ENCODE measurements at regions of chr1 and their contacts with region 1.

Region 1: DNA sequence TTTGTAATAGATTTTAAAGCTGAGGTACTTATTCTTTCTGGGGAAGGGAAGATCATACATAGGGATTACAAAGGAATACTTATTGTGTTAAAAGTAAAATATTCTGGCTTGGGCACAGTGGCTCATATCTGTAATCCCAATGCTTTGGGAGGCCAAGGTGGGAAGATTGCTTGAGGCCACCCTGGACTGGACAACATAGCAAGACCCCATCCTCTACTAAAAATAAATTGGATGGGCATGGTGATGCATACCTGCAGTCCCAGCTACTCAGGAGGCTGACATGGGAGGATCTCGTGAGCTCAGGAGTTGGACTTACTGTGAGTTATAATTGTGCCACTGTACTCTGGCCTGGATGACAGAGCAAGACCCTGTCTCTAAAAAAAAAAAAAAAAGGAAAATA is 27.6 kb downstream of the GABPB2 start:
- DNase-seq: no peak
- ATAC-seq: no peak
- H3K4me3 ChIP-seq: no peak overlapping the region
- H3K27ac ChIP-seq: no peak overlapping the region
- H3K4me1 ChIP-seq: no peaks in the 10 kb centered on the region
- H3K27me3 ChIP-seq: no peaks in the 10 kb centered on the region
- CTCF ChIP-seq: no peak
- EP300 ChIP-seq: no peak
- POLR2A ChIP-seq: no peak
- RAD21 ChIP-seq: no peak

Region 2: DNA sequence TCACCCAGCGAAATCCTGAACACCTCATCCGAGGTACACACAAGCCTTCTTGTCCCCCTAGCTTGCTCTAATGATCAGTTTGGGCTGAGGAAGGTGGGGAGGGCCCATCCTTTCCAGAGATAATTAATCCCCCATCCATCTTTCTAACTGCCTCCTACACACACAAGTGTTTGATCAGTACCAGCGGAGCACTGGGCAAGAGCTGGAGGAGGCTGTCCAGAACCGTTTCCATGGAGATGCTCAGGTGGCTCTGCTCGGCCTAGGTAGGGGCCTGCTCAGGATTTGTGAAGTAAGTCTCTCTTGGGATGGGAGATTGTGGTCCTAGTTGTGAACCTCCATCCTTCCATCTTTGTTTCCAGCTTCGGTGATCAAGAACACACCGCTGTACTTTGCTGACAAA is 110.2 kb before region 1 on chr1:
- CTCF ChIA-PET with region 1: no interaction called
- POLR2A ChIA-PET with region 1: no interaction called
- RAD21 ChIA-PET with region 1: no interaction called
- SMC1A ChIA-PET with region 1: no interaction called
- in situ Hi-C with region 1: no loop called
- intact Hi-C with region 1: no loop called
- DNase-seq: no peak
- ATAC-seq: no peak
- H3K4me3 ChIP-seq: no peak overlapping the region
- H3K27ac ChIP-seq: no peak overlapping the region
- H3K4me1 ChIP-seq: no peaks in the 10 kb centered on the region
- H3K27me3 ChIP-seq: no peaks in the 10 kb centered on the region
- CTCF ChIP-seq: no peak
- EP300 ChIP-seq: no peak
- POLR2A ChIP-seq: no peak
- RAD21 ChIP-seq: no peak

Region 3: DNA sequence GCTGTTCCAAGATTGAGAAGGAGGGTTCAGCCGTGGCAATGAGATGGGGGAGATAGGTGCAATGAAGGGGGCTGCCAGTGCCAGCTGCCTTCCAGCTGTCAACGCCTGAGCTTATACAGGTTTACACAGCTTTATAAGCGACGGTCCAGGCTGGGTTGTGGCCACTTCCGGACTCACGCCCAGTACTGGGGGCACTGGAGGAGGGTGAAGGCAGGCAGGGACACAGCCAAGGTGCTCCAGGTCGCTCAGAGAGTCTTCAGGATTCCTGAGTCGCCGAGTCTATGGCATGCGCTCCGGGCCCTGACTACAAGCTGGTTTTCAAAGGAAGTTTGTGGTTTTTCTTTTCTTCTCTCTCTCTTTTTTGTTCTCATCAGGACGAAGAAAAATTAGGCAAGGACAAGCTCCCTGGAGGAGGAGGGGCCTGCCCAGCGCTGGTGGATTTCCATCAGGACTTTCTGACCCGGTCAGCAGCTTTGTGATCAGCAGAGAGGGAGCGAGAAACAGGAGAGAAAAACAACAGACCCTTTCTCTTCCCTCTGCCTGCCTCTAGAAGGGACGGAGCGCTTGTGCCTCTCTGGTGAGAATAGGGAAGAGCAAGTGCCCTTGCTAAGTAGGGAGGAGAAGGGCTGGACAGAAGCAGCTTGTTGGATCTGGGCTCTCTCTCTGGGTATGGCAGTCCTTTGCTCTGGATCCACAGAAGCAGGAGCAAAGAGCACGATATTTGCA is 91.6 kb before region 1 on chr1 and contains the start of gene MINDY1:
- CTCF ChIA-PET with region 1: interaction called, 11 read pairs
- POLR2A ChIA-PET with region 1: interaction called, 5 read pairs
- RAD21 ChIA-PET with region 1: interaction called, 3 read pairs
- SMC1A ChIA-PET with region 1: interaction called, 4 read pairs
- in situ Hi-C with region 1: no loop called
- intact Hi-C with region 1: no loop called
- DNase-seq: peak; percentile 32
- ATAC-seq: peak; percentile 71
- H3K4me3 ChIP-seq: peak within 1 kb of the TSS; percentile 73
- H3K27ac ChIP-seq: peak within 1 kb of the TSS; percentile 73
- H3K4me1 ChIP-seq: peaks cover 12% of the 10 kb centered on the region
- H3K27me3 ChIP-seq: no peaks in the 10 kb centered on the region
- CTCF ChIP-seq: peak; percentile 38 to 57 (median 43); a peak in 4 of 6 replicates
- EP300 ChIP-seq: no peak
- POLR2A ChIP-seq: peak; percentile 60
- RAD21 ChIP-seq: peak; percentile 39; the same call in 1 of the 2 replicates
- polyA plus RNA-seq, gene MINDY1: 0.48 to 0.49 TPM

Region 4: DNA sequence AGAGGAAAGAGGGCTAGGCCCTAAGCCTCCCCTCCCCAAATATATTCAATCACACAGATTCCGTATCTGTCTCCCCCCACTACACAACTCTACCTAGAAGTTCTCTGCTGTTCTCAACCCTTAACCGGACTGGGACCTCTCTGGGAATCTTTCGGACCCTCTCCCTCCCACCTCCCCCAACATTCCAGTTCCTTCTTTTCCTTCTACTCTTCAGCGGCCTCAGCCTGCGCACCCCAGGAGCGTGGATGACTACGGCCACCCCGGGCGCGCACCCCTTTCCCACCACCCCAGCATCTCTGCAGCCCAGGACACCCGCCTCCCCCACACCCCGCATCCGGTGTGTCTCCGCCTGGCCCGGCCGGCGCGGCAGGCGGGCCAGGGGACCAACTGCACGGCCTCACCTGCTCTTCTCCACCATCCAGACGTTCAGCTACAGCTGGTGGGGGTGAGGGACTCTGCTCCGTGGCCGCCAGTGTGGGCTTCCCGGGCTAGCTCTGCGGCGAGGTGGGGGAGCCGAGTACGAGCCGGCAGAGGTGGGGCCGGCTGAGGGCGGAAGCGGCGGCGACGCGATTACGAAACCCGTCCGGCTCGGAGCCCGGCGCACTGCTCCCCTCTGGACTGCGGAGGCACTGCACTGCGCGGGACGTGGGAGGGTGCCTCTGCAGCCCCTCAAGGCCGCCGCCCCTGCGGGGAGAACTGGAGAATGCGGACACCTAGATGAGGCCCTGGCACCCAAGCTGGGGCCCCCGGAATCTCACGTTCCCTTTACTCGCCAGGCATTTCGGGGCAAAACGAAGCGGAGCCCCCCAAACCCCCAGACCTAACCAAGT is 38.8 kb before region 1 on chr1 and contains the start of gene CDC42SE1:
- CTCF ChIA-PET with region 1: interaction called, 12 read pairs
- POLR2A ChIA-PET with region 1: no interaction called
- RAD21 ChIA-PET with region 1: interaction called, 4 read pairs
- SMC1A ChIA-PET with region 1: interaction called, 9 read pairs
- in situ Hi-C with region 1: no loop called
- intact Hi-C with region 1: no loop called
- DNase-seq: peak; percentile 55
- ATAC-seq: peak; percentile 86
- H3K4me3 ChIP-seq: peak within 1 kb of the TSS; percentile 93
- H3K27ac ChIP-seq: peak within 1 kb of the TSS; percentile 97
- H3K4me1 ChIP-seq: peaks cover 28% of the 10 kb centered on the region
- H3K27me3 ChIP-seq: no peaks in the 10 kb centered on the region
- CTCF ChIP-seq: peak; percentile 75 to 90 (median 84)
- EP300 ChIP-seq: no peak
- POLR2A ChIP-seq: peak; percentile 98
- RAD21 ChIP-seq: 0 out of 2 replicates have a peak, but pooled peaks have one; percentile 1
- polyA plus RNA-seq, gene CDC42SE1: 36.9 to 38.0 TPM

Region 5: DNA sequence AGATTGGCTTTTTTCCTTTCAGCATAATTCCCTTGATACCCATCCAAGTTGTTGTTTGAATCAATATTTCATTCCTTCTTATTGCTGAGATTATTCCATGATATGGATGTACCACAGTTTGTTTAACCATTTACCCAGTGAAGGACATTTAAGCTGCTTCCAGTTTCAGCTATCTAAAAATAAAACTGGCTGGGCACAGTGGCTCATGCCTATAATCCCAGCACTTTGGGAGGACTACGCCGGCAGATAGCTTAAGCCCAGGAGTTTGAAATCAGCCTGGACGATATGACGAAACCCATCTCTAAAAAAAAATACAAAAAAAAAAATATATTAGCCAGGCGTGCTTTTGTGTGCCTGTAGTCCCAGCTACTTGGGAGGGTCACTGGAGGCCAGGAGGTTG is 15.8 kb after region 1 on chr1:
- CTCF ChIA-PET with region 1: interaction called, 34 read pairs
- POLR2A ChIA-PET with region 1: no interaction called
- RAD21 ChIA-PET with region 1: interaction called, 5 read pairs
- SMC1A ChIA-PET with region 1: interaction called, 15 read pairs
- in situ Hi-C with region 1: no loop called
- intact Hi-C with region 1: no loop called
- DNase-seq: no peak
- ATAC-seq: no peak
- H3K4me3 ChIP-seq: no peak overlapping the region
- H3K27ac ChIP-seq: no peak overlapping the region
- H3K4me1 ChIP-seq: no peaks in the 10 kb centered on the region
- H3K27me3 ChIP-seq: no peaks in the 10 kb centered on the region
- CTCF ChIP-seq: no peak
- EP300 ChIP-seq: no peak
- POLR2A ChIP-seq: no peak
- RAD21 ChIP-seq: no peak

Region 6: DNA sequence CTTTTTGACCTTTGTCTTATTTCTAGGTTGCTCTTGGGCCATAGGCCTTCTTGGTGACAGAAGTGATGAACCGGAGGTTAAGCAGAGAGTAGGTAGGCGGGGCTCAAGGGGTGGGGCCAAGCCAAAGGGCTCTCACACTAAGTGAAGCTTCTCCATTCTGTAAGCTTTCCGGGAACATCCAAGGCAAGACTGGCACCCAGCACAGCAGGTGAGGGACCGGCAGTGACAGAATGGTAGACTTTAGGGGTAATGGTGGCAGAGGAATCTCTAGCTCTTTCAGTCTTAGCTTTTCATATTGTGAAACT is 58.3 kb after region 1 on chr1 and contains the start of gene TNFAIP8L2:
- CTCF ChIA-PET with region 1: interaction called, 353 read pairs
- POLR2A ChIA-PET with region 1: interaction called, 8 read pairs
- RAD21 ChIA-PET with region 1: interaction called, 198 read pairs
- SMC1A ChIA-PET with region 1: interaction called, 282 read pairs
- in situ Hi-C with region 1: loop called (anchors 5 kb)
- intact Hi-C with region 1: loop called (anchors 1 kb)
- DNase-seq: peak; percentile 32
- ATAC-seq: peak; percentile 96
- H3K4me3 ChIP-seq: peak within 1 kb of the TSS; percentile 85
- H3K27ac ChIP-seq: peak within 1 kb of the TSS; percentile 81
- H3K4me1 ChIP-seq: peaks cover 30% of the 10 kb centered on the region
- H3K27me3 ChIP-seq: no peaks in the 10 kb centered on the region
- CTCF ChIP-seq: no peak
- EP300 ChIP-seq: no peak
- POLR2A ChIP-seq: peak; percentile 30; the same call in 1 of the 2 replicates
- RAD21 ChIP-seq: no peak
- polyA plus RNA-seq, gene TNFAIP8L2: 23.9 to 26.3 TPM

Region 7: GRCh38 chr1:151189638-151190445 is 91.7 kb after region 1 on chr1 and contains the start of gene VPS72:
- CTCF ChIA-PET with region 1: interaction called, 9 read pairs
- POLR2A ChIA-PET with region 1: no interaction called
- RAD21 ChIA-PET with region 1: interaction called, 4 read pairs
- SMC1A ChIA-PET with region 1: interaction called, 12 read pairs
- in situ Hi-C with region 1: no loop called
- intact Hi-C with region 1: no loop called
- DNase-seq: peak; percentile 72
- ATAC-seq: peak; percentile 92
- H3K4me3 ChIP-seq: peak within 1 kb of the TSS; percentile 76
- H3K27ac ChIP-seq: peak within 1 kb of the TSS; percentile 87
- H3K4me1 ChIP-seq: peaks cover 4% of the 10 kb centered on the region; the same call in 1 of the 2 replicates
- H3K27me3 ChIP-seq: no peaks in the 10 kb centered on the region
- CTCF ChIP-seq: no peak
- EP300 ChIP-seq: no peak; a peak in 1 of 4 replicates
- POLR2A ChIP-seq: peak; percentile 92
- RAD21 ChIP-seq: no peak
- polyA plus RNA-seq, gene VPS72: 6.7 to 9.0 TPM

Measured in GM12878 (cell line).